Calu3 (cell line): ENCODE measurements at regions of chr6 and their contacts with region 1.

Region 1: GRCh38 chr6:27188885-27189418 is 58.5 kb upstream of the PRSS16 start:
- DNase-seq: peak; percentile 79
- H3K4me3 Mint-ChIP-seq: peak overlapping the region; percentile 78
- H3K27ac Mint-ChIP-seq: peak overlapping the region; percentile 55
- H3K4me1 Mint-ChIP-seq: peaks cover 9% of the 10 kb centered on the region
- H3K27me3 Mint-ChIP-seq: no peaks in the 10 kb centered on the region
- CTCF ChIP-seq: peak; percentile 71

Region 2: DNA sequence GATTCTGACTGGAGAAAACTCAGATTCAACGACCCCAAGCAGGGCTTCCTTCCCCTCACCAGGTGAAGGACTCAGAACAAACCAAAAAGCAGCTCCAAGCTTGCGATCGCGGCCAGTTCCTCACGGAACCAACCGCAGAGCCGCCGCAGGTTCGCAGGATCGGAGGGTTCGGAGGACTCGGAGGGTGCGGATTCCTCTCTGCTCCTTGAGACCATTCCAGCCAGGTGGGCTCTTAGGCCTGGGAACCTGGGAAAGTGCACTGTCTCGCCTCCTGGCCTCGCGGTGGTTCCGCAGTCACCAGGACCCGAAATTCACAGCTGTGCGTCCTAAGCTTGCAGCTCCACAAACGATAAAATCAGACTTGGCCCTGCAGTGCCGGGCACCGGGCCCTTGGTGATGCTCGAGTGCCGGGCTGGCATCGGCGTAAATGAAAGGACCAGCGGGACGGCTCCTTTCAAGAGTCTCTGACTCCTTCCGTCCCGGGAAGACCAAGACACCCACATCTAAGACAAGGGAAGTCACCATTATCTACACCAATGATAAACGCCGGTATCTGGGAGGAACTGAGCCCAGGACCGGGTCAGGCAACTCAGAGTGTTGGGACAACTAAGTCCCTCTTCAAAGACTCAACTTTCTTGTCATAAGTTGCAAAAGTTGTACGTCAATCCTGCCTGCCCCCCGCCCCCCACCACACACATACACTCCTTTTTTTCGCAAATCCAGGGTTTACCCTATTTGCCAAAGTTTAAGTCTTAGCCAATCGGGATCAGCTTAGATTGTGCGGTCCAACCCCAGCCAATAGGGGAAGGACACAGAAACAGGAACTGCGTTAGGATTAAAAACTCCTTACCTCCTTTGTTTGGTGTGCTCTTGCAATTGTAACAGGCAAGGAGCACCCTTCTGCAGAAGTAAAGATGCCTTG is 11.2 kb before region 1 on chr6:
- CTCF ChIA-PET with region 1: interaction called, 7 read pairs
- intact Hi-C with region 1: loop called (anchors 1 kb)
- DNase-seq: peak; percentile 92
- H3K4me3 Mint-ChIP-seq: peak overlapping the region; percentile 86
- H3K27ac Mint-ChIP-seq: peak overlapping the region; percentile 99
- H3K4me1 Mint-ChIP-seq: no peaks in the 10 kb centered on the region
- H3K27me3 Mint-ChIP-seq: peaks cover 20% of the 10 kb centered on the region
- CTCF ChIP-seq: peak; percentile 45

Region 3: DNA sequence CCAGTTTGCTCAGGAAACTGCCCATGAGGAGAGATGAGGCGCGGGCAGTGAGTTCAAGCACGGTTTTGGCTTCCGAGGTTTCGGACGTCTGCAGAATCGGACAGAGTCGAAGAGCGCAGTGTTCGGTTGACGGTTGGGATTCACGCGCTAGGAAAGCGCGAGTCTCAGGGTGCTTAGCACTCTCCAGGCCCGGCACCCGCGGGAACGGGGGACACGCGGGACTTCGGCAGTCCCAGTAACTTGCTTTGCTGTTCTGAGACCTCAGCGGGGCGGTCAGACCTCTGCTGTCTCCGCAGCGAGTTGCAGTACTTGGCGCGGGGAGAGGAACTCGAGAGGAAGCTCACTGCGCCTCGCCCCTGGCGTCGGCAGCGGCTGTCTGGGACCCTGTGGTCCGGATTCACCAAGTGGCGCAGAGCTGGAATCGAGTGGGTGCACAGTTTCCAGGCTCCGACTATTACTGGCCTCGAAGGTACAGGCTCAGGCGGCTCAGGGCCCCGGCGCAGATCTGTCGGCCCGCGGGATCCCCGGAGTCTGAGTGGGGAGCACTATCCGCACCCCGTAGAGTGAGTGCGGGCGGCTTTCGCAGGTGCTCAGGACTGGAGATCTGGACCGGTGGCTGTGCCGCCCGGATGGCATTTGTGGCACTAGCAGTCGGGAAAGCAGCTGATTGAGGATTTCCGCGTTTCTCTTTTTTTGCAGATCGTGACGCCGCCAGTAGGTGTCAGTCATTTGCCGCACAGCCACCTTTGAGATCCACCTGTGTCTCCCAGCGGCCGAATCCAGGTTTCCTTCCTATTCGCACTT is 123.4 kb after region 1 on chr6 and contains the start of gene POM121L2:
- CTCF ChIA-PET with region 1: no interaction called
- intact Hi-C with region 1: loop called (anchors 5 kb)
- DNase-seq: peak; percentile 84
- H3K4me3 Mint-ChIP-seq: peak within 1 kb of the TSS; percentile 65
- H3K27ac Mint-ChIP-seq: no peak within 1 kb of the TSS
- H3K4me1 Mint-ChIP-seq: no peaks in the 10 kb centered on the region
- H3K27me3 Mint-ChIP-seq: no peaks in the 10 kb centered on the region
- CTCF ChIP-seq: peak; percentile 87
- total RNA-seq, gene POM121L2: not detected in 2 replicates

Region 4: GRCh38 chr6:27608916-27609883 is 420.2 kb after region 1 on chr6:
- CTCF ChIA-PET with region 1: interaction called, 5 read pairs
- intact Hi-C with region 1: loop called (anchors 2 kb)
- DNase-seq: peak; percentile 78
- H3K4me3 Mint-ChIP-seq: no peak overlapping the region
- H3K27ac Mint-ChIP-seq: peak overlapping the region; percentile 57
- H3K4me1 Mint-ChIP-seq: peaks cover 28% of the 10 kb centered on the region
- H3K27me3 Mint-ChIP-seq: no peaks in the 10 kb centered on the region
- CTCF ChIP-seq: peak; percentile 83

Region 5: GRCh38 chr6:27687154-27688013 is 498.4 kb after region 1 on chr6:
- CTCF ChIA-PET with region 1: no interaction called
- intact Hi-C with region 1: loop called (anchors 1 kb)
- DNase-seq: peak; percentile 92
- H3K4me3 Mint-ChIP-seq: peak overlapping the region; percentile 84
- H3K27ac Mint-ChIP-seq: peak overlapping the region; percentile 84
- H3K4me1 Mint-ChIP-seq: peaks cover 14% of the 10 kb centered on the region
- H3K27me3 Mint-ChIP-seq: no peaks in the 10 kb centered on the region
- CTCF ChIP-seq: peak; percentile 87